Lower leg skin (tissue), 4 donors: ENCODE measurements at regions of chr1 and their contacts with region 1.

Region 1: GRCh38 chr1:24849672-24850295 is 80.3 kb downstream of the RUNX3 start:
- DNase-seq: no peak
- H3K4me3 ChIP-seq: no peak overlapping the region
- CTCF ChIP-seq: no peak
- POLR2A ChIP-seq: no peak

Region 2: GRCh38 chr1:24765308-24765988 is 84.3 kb before region 1 on chr1:
- intact Hi-C with region 1: no loop called
- DNase-seq: no peak
- H3K4me3 ChIP-seq: no peak overlapping the region
- CTCF ChIP-seq: no peak
- POLR2A ChIP-seq: no peak

Region 3: GRCh38 chr1:24793447-24794131 is 56.2 kb before region 1 on chr1:
- intact Hi-C with region 1: no loop called
- DNase-seq: no peak
- H3K4me3 ChIP-seq: no peak overlapping the region
- CTCF ChIP-seq: no peak
- POLR2A ChIP-seq: no peak

Region 4: GRCh38 chr1:25099343-25099951 is 249.7 kb after region 1 on chr1:
- intact Hi-C with region 1: loop called (anchors 10 kb)
- DNase-seq: no peak
- H3K4me3 ChIP-seq: no peak overlapping the region
- CTCF ChIP-seq: no peak
- POLR2A ChIP-seq: no peak

Region 5: DNA sequence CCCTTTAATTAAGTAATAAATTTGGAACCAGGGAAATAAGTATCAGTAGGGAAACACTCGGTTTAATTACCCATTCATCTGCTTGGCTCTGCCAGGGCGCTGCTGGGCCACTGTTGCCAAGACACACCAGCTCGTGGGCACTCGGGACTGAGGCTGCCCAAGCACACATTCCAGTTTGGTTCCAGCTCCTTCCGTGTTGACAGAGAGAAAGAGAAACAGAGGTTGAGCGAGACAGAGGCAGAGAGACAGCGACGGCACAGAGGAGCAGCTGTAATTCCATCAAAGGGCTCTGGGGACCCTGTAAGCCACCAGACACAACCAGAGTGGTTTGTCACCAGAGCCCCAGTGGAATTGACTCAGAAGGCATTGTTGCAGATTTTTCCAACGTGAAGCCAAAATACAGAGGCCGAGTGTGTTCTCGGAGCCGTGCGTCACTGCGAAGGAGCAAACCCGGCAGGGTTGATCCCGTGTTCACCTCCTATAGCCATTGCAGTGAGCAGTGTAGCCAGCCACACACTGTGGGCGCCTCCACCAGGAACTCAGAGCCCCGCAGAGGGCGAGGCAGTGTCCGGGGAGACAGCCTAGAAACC is 349.0 kb after region 1 on chr1:
- intact Hi-C with region 1: loop called (anchors 10 kb)
- DNase-seq: peak in 1 of 2 donors; percentile 37
- H3K4me3 ChIP-seq: no peak overlapping the region
- CTCF ChIP-seq: peak in 1 of 3 donors; percentile 47
- POLR2A ChIP-seq: no peak